Dendritic cell treated with granulocyte-macrophage colony-stimulating factor and Interleukin-4, amounts not matched to agents 40 ng/mL and 50 ng/mL, for 4 days (primary cell): ENCODE measurements at regions of chr13 and their contacts with region 1.

Region 1: DNA sequence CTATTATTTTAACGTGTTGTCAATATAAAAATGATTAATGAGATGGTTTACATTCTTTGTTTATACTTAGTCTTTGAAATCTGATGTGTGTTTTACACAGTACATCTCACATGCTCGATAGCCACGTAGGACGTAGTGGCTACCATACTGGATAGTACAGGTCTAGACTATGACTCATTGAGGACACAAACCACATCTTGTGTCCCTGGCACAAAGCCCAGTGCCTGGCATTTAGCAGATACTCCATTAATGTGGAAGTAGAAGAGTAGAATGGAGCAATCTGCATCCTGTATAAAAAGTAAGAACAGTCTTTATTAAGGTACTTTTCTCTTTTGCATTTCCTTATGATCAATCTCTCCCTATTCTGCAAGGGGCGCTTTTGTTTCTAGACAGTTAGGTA is 49.0 kb upstream of the FRY start:
- H3K4me3 Mint-ChIP-seq: no peak overlapping the region
- H3K27ac Mint-ChIP-seq: no peak overlapping the region
- H3K4me1 Mint-ChIP-seq: peaks cover 25% of the 10 kb centered on the region
- H3K27me3 Mint-ChIP-seq: no peaks in the 10 kb centered on the region

Region 2: DNA sequence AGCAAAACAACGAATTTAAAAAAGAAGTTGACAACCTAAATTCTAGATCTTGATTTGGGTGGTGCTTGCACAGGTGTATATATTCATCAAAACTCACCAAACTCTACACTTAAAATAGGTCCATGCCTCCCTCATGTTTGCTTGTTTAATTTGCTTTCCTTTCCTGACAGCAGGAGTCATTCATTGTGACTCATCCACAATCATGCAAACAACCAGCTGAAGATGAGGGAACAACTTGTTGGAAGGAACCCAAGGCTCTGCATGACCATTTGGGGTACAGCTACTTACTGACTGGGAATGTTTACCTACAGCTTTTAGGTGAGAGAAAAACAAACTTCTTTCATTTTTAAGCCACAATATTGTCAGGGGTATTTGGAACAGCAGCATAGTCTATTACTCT is 146.6 kb before region 1 on chr13:
- intact Hi-C with region 1: loop called (anchors 10 kb)
- H3K4me3 Mint-ChIP-seq: no peak overlapping the region
- H3K27ac Mint-ChIP-seq: no peak overlapping the region
- H3K4me1 Mint-ChIP-seq: peaks cover 8% of the 10 kb centered on the region
- H3K27me3 Mint-ChIP-seq: no peaks in the 10 kb centered on the region

Region 3: GRCh38 chr13:31951215-31951678 is 31.3 kb before region 1 on chr13:
- intact Hi-C with region 1: no loop called
- H3K4me3 Mint-ChIP-seq: no peak overlapping the region
- H3K27ac Mint-ChIP-seq: peak overlapping the region; percentile 86
- H3K4me1 Mint-ChIP-seq: peaks cover 60% of the 10 kb centered on the region
- H3K27me3 Mint-ChIP-seq: no peaks in the 10 kb centered on the region

Region 4: DNA sequence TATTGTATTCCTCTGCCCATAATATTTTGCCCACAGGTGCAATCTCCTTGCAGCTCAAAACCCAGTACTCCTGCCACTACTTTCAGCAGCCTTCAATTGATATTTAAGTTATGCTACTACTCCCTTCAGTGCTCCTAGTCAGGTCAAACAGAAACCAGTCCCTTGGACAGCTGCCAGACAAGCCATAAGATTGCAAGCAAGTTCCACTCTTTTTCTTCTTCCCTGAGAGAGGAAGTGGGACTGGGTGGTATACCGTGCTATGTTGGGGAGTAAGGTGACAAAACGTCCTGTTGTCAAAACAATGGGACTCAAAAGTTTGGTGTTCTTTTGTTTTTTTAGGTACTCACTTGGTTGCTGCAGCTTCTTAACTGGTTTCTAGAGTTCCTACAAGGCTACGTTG is 14.1 kb before region 1 on chr13:
- intact Hi-C with region 1: loop called (anchors 2 kb)
- H3K4me3 Mint-ChIP-seq: no peak overlapping the region
- H3K27ac Mint-ChIP-seq: no peak overlapping the region
- H3K4me1 Mint-ChIP-seq: peaks cover 23% of the 10 kb centered on the region
- H3K27me3 Mint-ChIP-seq: no peaks in the 10 kb centered on the region